ENCODE measurements at regions of chr2 and their contacts with region 1.

Region 1: DNA sequence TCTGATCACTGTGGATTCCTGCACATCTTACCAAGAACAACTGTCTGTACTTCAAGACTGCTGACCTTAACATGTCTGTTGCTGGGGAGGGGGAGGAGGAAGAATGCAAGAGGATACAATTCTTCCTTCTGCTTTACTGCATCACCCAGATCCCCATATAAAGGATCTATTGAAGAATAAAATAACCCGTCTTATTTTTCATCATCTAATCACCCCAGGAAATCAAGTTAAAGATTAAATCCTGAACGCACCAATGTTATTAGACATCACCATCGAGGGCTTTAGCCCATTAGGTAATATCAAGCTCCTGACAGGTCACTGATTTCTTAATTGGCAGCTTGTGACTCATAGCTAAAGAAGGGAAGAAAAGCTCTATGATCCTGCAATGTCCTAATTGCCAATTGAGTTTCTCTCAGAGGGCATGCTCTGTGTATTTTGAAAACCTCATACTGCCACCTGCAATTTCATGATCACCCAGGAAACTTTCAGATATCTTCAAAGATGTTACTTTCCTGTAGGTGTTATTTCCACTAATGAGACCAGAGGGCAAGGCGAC is 75.4 kb upstream of the KCNE4 start:
- DNase-seq: no peak
- ATAC-seq: peak; percentile 58
- H3K4me3 ChIP-seq: no peak overlapping the region
- H3K27ac ChIP-seq: no peak overlapping the region
- H3K4me1 ChIP-seq: no peaks in the 10 kb centered on the region
- H3K27me3 ChIP-seq: no peaks in the 10 kb centered on the region
- CTCF ChIP-seq: no peak
- EP300 ChIP-seq: no peak
- POLR2A ChIP-seq: no peak
- RAD21 ChIP-seq: no peak

Region 2: DNA sequence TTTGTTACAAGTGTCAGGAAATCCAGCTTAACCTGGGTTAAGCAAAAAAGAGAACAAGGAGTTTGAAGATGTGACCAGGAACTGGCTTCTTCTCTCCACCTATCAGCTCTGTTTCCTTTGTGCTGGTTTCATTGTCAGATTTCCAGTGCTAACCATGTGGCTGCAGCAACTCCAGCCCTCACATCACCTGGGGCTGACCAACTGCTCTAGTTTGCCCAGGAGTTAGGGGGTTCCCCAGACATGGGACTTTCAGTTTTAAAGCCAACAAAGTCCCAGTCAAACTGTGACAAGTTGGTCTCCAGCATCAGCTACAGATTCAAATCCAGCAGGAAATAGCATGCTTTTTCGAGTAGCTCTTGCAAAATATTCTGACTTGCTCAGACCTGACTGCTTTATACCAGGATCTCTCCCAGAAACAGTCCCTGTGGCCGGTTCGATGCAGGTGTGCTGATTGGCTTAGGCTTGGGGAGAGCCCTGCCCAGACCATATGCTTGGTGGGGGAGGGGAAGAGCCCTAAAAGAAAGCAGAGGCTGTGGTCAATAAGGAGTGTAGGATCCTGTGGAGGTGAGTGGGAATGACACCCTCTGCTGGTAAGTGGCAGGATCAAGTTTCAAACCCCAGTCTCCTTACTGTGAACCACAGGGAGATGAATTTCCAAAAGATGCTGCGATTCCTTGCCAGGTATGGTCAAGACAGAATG is 124.9 kb after region 1 on chr2:
- CTCF ChIA-PET with region 1: interaction called, 14 read pairs
- POLR2A ChIA-PET with region 1: no interaction called
- RAD21 ChIA-PET with region 1: interaction called, 8 read pairs
- SMC1A ChIA-PET with region 1: no interaction called
- in situ Hi-C with region 1: no loop called
- intact Hi-C with region 1: loop called (anchors 1 kb)
- DNase-seq: peak; percentile 31
- ATAC-seq: peak; percentile 83
- H3K4me3 ChIP-seq: no peak overlapping the region
- H3K27ac ChIP-seq: no peak overlapping the region
- H3K4me1 ChIP-seq: peaks cover 5% of the 10 kb centered on the region; the same call in 1 of the 2 replicates
- H3K27me3 ChIP-seq: no peaks in the 10 kb centered on the region; a peak in 1 of 4 replicates
- CTCF ChIP-seq: peak; percentile 26 to 34 (median 28); a peak in 4 of 6 replicates
- EP300 ChIP-seq: no peak
- POLR2A ChIP-seq: no peak
- RAD21 ChIP-seq: 0 out of 2 replicates have a peak, but pooled peaks have one; percentile 20

Region 3: GRCh38 chr2:223459328-223459939 is 482.8 kb after region 1 on chr2:
- CTCF ChIA-PET with region 1: interaction called, 4 read pairs
- POLR2A ChIA-PET with region 1: no interaction called
- RAD21 ChIA-PET with region 1: no interaction called
- SMC1A ChIA-PET with region 1: interaction called, 3 read pairs
- in situ Hi-C with region 1: no loop called
- intact Hi-C with region 1: loop called (anchors 5 kb)
- DNase-seq: no peak
- ATAC-seq: no peak
- H3K4me3 ChIP-seq: no peak overlapping the region
- H3K27ac ChIP-seq: no peak overlapping the region
- H3K4me1 ChIP-seq: no peaks in the 10 kb centered on the region
- H3K27me3 ChIP-seq: no peaks in the 10 kb centered on the region
- CTCF ChIP-seq: peak in 2 of 3 experiments; percentile 9 to 18; a peak in 1 of 6 replicates
- EP300 ChIP-seq: no peak
- POLR2A ChIP-seq: no peak
- RAD21 ChIP-seq: no peak

Measured in GM12878 (cell line).